ENCODE measurements at regions of chr9 and their contacts with region 1.

Region 1: GRCh38 chr9:34413231-34413852 is 36.6 kb upstream of the MYORG start:
- DNase-seq: peak; percentile 32 to 64 (median 53)
- H3K4me3 ChIP-seq: no peak overlapping the region
- H3K27ac ChIP-seq: no peak overlapping the region
- H3K4me1 ChIP-seq: no peaks in the 10 kb centered on the region
- H3K27me3 ChIP-seq: no peaks in the 10 kb centered on the region
- CTCF ChIP-seq: no peak
- EP300 ChIP-seq: no peak
- POLR2A ChIP-seq: no peak

Region 2: GRCh38 chr9:34500623-34501267 is 87.4 kb after region 1 on chr9:
- intact Hi-C with region 1: loop called in 2 of 4 experiments (anchors 5 to 10 kb)
- DNase-seq: peak; percentile 32 to 68 (median 64)
- H3K4me3 ChIP-seq: no peak overlapping the region
- H3K27ac ChIP-seq: no peak overlapping the region
- H3K4me1 ChIP-seq: peaks cover 5% of the 10 kb centered on the region
- H3K27me3 ChIP-seq: no peaks in the 10 kb centered on the region
- CTCF ChIP-seq: peak; percentile 72 to 81 (median 80)
- EP300 ChIP-seq: no peak
- POLR2A ChIP-seq: no peak

Measured in ovary (tissue), 10 donors.